AG04449 (cell line): ENCODE measurements at regions of chr9 and their contacts with region 1.

Region 1: GRCh38 chr9:130701056-130702022 is 7.8 kb downstream of the EXOSC2 start:
- DNase-seq: peak; percentile 57
- H3K4me3 ChIP-seq: no peak overlapping the region
- CTCF ChIP-seq: peak; percentile 95

Region 2: GRCh38 chr9:130712564-130713285 is 11.4 kb after region 1 on chr9:
- CTCF ChIA-PET with region 1: interaction called, 58 read pairs
- POLR2A ChIA-PET with region 1: no interaction called
- DNase-seq: peak; percentile 88
- H3K4me3 ChIP-seq: peak overlapping the region; percentile 79
- CTCF ChIP-seq: no peak

Region 3: GRCh38 chr9:130834371-130835311 is 133.3 kb after region 1 on chr9 and contains the start of gene ABL1:
- CTCF ChIA-PET with region 1: interaction called, 10 read pairs
- POLR2A ChIA-PET with region 1: no interaction called
- DNase-seq: no peak
- H3K4me3 ChIP-seq: peak within 1 kb of the TSS; percentile 78
- CTCF ChIP-seq: no peak

Region 4: GRCh38 chr9:130860458-130861316 is 159.3 kb after region 1 on chr9:
- CTCF ChIA-PET with region 1: interaction called, 786 read pairs
- POLR2A ChIA-PET with region 1: no interaction called
- DNase-seq: peak; percentile 95
- H3K4me3 ChIP-seq: no peak overlapping the region; the same call in 1 of the 2 replicates
- CTCF ChIP-seq: peak; percentile 54

Region 5: DNA sequence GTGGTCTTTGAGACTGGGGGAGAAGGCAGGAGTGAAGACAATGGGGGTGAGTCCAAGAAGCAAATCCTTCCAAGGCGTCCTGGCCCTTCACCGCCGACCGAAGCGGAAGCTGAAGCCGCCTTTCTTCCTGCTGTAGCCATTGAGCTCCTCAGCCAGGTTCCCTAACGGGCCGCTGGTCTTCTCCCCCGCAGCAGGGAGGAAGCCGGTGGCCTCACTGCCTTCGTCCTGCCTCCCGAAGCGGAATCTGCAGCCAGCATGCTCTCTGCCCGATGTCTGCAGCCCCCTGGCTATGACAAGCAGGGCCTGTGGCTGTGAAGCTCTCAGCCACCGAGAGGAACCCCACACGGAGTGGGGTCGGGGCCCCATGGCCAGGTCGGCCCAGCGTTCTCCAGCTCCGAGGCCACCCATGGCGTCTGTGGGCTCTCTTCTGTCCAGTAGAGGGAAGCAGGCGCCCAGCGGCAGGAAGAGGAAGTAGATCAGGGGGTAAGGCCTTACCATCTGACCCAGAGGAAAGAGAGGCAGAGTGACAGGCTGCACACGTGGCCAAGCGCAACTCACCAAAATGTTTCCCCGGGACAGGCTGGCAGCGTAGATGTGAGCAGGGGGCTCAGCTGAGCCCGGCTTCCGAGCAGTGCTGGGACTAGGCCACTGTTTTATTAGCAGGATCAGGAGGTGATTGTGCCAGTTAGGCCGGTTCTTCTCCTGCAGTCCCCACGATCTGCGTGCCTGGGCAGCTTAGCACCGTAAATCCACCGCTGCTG is 192.2 kb after region 1 on chr9:
- CTCF ChIA-PET with region 1: interaction called, 20 read pairs
- POLR2A ChIA-PET with region 1: no interaction called
- DNase-seq: no peak
- H3K4me3 ChIP-seq: no peak overlapping the region
- CTCF ChIP-seq: peak; percentile 24

Region 6: DNA sequence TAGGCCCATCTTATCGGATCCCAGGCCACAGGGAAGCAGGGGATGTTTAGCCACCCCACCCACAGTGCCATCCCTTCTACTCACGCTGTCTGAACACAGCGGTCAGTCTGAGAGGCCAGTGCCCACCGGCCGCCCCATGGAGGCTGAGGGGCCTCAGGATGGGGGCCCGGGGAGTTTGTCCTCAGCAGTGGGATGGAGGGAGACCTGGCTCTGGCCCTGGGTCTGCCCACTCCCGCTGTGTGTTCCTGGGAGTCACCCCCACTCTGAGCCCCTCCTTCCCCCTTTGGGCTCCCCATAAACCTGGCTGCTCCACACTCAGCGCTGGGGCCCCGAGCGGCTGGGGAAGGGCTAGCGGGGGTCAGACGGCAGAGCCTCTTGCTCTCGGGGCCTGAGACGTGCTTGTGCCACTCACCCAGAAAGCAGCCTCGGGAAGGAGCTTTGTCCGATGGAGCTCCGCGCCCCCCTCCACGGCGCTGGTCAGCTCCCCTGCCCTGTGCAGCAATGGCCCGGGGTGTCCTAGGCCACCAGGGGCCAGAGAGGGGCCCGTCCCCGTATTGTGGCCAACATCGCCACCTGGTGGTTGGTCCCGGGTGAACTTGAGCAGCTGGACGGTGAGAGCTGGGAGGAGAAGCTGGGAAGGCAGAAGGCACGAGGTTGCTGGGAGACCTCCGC is 296.7 kb after region 1 on chr9:
- CTCF ChIA-PET with region 1: interaction called, 167 read pairs
- POLR2A ChIA-PET with region 1: no interaction called
- DNase-seq: no peak
- H3K4me3 ChIP-seq: no peak overlapping the region
- CTCF ChIP-seq: peak; percentile 83